GM12878 (cell line): ENCODE measurements at regions of chr1 and their contacts with region 1.

Region 1: GRCh38 chr1:168019407-168019806 is 82.5 kb upstream of the MPC2 start:
- DNase-seq: no peak
- ATAC-seq: peak; percentile 72
- H3K4me3 ChIP-seq: no peak overlapping the region
- H3K27ac ChIP-seq: no peak overlapping the region
- H3K4me1 ChIP-seq: no peaks in the 10 kb centered on the region
- H3K27me3 ChIP-seq: no peaks in the 10 kb centered on the region
- CTCF ChIP-seq: no peak
- EP300 ChIP-seq: no peak
- POLR2A ChIP-seq: no peak
- RAD21 ChIP-seq: no peak

Region 2: GRCh38 chr1:168065506-168065905 is 46.1 kb after region 1 on chr1:
- CTCF ChIA-PET with region 1: interaction called, 3 read pairs
- POLR2A ChIA-PET with region 1: no interaction called
- RAD21 ChIA-PET with region 1: no interaction called
- SMC1A ChIA-PET with region 1: no interaction called
- in situ Hi-C with region 1: no loop called
- intact Hi-C with region 1: loop called (anchors 5 kb)
- DNase-seq: no peak
- ATAC-seq: no peak
- H3K4me3 ChIP-seq: no peak overlapping the region
- H3K27ac ChIP-seq: no peak overlapping the region
- H3K4me1 ChIP-seq: no peaks in the 10 kb centered on the region
- H3K27me3 ChIP-seq: no peaks in the 10 kb centered on the region
- CTCF ChIP-seq: no peak
- EP300 ChIP-seq: no peak
- POLR2A ChIP-seq: no peak
- RAD21 ChIP-seq: no peak